ENCODE measurements at regions of chr3 and their contacts with region 1.

Region 1: DNA sequence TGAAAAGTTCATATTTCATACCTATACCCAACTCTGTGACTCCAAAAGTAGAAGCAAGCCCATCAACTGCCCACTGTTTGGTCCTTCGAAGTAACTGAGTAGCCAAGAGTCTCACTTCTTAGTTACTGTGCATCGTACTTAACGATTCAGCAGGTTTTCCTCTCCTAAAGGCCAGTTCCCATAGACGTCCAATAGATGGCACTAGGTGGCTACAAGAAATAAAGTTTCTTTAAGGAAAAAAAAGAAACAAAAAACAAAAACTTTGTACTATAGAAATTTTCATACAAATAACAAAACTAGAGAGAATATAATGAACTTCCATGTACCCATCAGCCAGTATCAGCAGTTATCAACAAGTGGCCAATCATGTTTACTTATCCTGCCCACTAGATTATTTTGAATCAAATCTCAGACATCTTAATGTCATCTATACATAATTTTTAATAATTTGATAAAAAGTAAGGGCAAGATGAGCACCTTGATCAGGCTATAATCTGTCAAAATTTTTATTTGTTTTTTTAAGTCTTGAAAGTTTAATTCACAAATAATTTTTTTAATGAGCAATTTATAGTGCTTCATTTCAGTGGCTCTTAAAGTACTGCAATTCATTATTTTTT is 63.8 kb upstream of the ACP3 start:
- ATAC-seq: peak in 3 of 8 experiments; percentile 30 to 55 (median 39)
- H3K4me3 ChIP-seq: no peak overlapping the region
- H3K27ac ChIP-seq: no peak overlapping the region
- H3K4me1 ChIP-seq: no peaks in the 10 kb centered on the region

Region 2: DNA sequence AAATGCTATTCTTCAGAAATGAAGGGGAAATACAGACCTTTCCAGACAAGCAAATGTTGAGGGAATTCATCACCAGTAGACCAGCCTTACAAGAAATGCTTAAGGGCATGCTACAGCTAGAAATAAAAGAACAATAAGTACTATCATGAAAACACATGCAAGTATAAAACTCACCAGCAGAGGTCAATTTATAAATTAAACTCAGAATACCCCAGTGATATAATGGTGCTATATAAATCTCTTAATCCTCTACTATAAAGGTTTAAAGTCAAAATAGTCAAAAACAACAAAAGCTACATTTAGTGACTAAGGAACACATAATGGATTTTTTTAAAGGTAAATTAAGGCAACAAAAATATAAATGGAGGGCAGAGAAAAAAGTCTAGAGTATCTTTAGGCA is 361.0 kb before region 1 on chr3:
- in situ Hi-C with region 1: no loop called
- ATAC-seq: no peak
- H3K4me3 ChIP-seq: no peak overlapping the region
- H3K27ac ChIP-seq: no peak overlapping the region
- H3K4me1 ChIP-seq: no peaks in the 10 kb centered on the region

Region 3: GRCh38 chr3:132343018-132343612 is 89.7 kb after region 1 on chr3:
- in situ Hi-C with region 1: loop called in 3 of 9 experiments (anchors 10 kb)
- ATAC-seq: peak in 3 of 8 experiments; percentile 57 to 66 (median 61)
- H3K4me3 ChIP-seq: no peak overlapping the region
- H3K27ac ChIP-seq: no peak overlapping the region
- H3K4me1 ChIP-seq: peaks cover 9 to 13% of the 10 kb centered on the region in 2 donors

Region 4: DNA sequence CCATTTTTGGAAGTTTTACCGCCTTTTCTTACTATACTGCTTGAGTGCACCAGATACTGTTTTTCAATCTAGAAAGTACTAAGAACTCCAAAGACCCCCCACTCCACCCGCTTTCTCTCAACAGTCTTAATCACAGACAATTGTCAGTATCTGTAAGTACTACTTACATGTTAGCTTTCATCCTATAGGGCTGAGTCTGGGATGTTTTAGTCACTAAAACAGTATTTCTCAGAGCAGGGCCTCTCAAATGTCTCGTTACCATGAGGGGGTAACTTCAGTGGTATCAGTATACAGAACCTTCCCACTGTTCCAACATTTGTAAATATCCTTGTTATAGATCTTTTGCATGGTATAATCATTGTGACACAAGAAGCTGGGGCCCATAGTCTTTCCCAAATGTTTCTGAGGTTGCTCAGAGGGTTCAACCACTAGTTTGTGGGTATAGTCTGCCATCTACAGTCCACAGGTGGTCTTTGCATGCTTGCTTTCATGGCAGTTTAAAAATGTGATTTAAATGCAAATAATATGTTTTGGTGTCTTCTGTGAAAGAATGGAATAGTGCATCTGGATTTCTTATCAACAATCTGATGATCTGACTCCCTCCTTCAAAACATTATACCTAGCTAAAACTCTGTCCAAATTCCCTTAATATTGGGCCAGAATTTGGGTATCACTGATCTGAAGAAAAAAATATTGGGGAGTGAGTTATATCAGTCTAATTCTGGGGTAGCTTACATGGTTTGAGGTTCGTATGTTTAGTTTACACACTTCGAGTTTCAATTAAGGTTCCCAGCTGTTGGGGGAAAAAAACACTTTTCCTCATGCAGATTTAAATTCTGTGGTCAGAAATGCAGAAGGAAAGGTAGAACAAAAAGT is 145.9 kb after region 1 on chr3:
- in situ Hi-C with region 1: loop called in 2 of 9 experiments (anchors 10 kb)
- ATAC-seq: peak; percentile 61 to 83 (median 71)
- H3K4me3 ChIP-seq: no peak overlapping the region
- H3K27ac ChIP-seq: no peak overlapping the region
- H3K4me1 ChIP-seq: no peaks in the 10 kb centered on the region

Region 5: GRCh38 chr3:132405188-132405587 is 151.8 kb after region 1 on chr3:
- in situ Hi-C with region 1: loop called in 1 of 9 experiments (anchors 10 kb)
- ATAC-seq: peak in 1 of 8 experiments; percentile 52
- H3K4me3 ChIP-seq: no peak overlapping the region
- H3K27ac ChIP-seq: no peak overlapping the region
- H3K4me1 ChIP-seq: no peaks in the 10 kb centered on the region

Region 6: GRCh38 chr3:132822266-132822665 is 568.9 kb after region 1 on chr3:
- in situ Hi-C with region 1: no loop called
- ATAC-seq: no peak
- H3K4me3 ChIP-seq: no peak overlapping the region
- H3K27ac ChIP-seq: no peak overlapping the region
- H3K4me1 ChIP-seq: no peaks in the 10 kb centered on the region

Measured in motor neuron (in vitro differentiated cells).